MCF 10A (cell line): ENCODE measurements at regions of chr3 and their contacts with region 1.

Region 1: DNA sequence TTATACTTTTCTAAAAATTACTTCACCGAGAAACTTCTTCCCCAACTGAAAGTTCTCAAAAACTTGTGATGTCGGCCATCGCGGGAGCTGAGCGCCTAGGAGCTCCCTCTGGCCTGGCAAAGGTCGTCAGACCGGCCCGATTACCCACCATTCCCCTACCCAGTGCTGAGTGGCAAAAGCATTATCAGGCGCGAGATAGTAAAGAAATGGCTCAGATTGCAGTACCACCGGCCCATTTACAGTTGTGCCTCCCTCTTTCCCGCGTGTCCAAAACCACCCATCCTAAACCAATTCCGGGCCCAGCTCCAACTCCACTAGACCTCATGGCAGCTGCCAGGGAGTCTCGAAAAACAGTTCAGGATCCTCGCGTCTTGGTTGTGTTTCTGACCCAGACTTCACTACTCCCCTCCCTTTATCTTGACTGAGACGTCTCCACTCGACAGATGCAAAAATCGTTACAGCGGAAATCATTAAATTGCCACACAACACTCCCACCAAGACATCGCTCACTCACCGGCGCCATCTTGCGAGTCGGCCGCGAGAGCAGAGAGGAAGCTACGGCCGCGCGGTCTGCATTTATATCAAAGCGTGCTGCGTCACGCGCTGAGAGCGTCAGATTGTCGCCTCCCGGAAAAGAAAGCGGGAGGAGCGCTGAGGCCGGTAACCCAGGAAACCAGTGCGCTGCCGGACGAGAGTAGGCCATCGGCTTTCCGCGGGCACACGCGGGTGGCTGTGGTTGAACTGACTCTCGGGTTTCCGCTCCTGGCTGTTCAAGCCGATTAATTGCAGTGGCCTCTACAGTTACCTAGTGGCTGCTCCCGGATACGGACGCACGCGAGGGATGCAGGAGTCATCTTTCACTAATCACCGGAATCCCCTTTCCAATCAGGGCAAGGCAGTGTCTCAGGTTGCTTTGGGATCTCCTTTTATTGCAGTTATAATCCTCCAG is at the start of gene RPL22L1:
- DNase-seq: peak; percentile 96
- H3K4me3 Mint-ChIP-seq: peak within 1 kb of the TSS; percentile 93
- H3K27ac Mint-ChIP-seq: peak within 1 kb of the TSS; percentile 97
- H3K4me1 Mint-ChIP-seq: peaks cover 10% of the 10 kb centered on the region
- H3K27me3 Mint-ChIP-seq: no peaks in the 10 kb centered on the region
- CTCF ChIP-seq: no peak
- total RNA-seq, gene RPL22L1: 205 and 409 TPM in 2 replicates

Region 2: GRCh38 chr3:170826047-170826446 is 43.9 kb before region 1 on chr3:
- CTCF ChIA-PET with region 1: no interaction called
- POLR2A ChIA-PET with region 1: no interaction called
- intact Hi-C with region 1: no loop called
- DNase-seq: no peak
- H3K4me3 Mint-ChIP-seq: no peak overlapping the region
- H3K27ac Mint-ChIP-seq: no peak overlapping the region
- H3K4me1 Mint-ChIP-seq: no peaks in the 10 kb centered on the region
- H3K27me3 Mint-ChIP-seq: peaks cover 11% of the 10 kb centered on the region
- CTCF ChIP-seq: no peak

Region 3: GRCh38 chr3:170889132-170889531 is 19.2 kb after region 1 on chr3:
- CTCF ChIA-PET with region 1: no interaction called
- POLR2A ChIA-PET with region 1: interaction called, 17 read pairs
- intact Hi-C with region 1: no loop called
- DNase-seq: no peak
- H3K4me3 Mint-ChIP-seq: no peak overlapping the region
- H3K27ac Mint-ChIP-seq: no peak overlapping the region
- H3K4me1 Mint-ChIP-seq: no peaks in the 10 kb centered on the region
- H3K27me3 Mint-ChIP-seq: no peaks in the 10 kb centered on the region
- CTCF ChIP-seq: no peak

Region 4: DNA sequence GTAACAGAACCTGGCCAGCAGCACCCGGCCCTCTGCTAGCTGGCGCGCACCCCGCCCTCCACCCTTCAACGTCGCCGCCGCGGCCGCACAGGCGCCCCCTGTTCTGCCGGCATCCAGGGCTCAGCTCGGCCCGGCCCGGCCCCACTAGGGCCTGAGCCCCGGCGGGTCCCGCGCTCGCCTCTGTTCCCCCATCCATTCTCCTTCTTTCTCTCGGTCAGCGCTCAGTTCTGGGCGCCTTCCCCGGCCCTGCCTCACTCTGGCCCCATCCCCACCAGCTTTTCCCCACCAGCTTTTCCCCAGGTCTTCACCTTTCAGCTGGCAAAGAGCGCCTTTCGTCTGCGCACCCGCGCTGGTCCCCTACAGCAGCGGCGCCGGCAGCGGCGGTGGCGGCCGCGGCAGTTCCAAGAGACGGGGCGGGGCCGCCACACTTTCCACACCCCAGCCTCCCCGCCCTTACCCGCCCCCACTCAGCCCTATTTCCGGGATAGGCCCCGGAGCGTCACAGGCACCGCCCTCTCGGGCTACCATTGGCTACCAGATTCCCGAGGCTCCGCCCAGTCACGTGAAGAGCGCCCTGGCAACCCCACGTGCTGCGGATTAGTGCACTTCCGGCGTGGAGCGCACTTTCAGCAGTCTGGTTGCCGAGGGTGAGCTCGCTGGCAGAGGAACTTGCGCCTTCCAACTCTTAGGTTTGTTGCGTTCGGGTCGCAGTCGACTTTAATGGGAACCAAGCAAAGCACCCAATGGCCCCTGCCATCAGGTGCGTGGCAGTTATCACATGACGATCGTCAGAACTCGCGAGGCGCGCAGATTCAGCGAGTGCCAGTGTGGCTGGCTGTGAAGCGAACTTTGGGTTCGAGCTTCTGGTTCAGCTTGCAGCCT is 38.6 kb after region 1 on chr3 and contains the start of gene EIF5A2:
- CTCF ChIA-PET with region 1: interaction called, 3 read pairs
- POLR2A ChIA-PET with region 1: interaction called, 10 read pairs
- intact Hi-C with region 1: loop called (anchors 1 kb)
- DNase-seq: peak; percentile 88
- H3K4me3 Mint-ChIP-seq: peak within 1 kb of the TSS; percentile 85
- H3K27ac Mint-ChIP-seq: peak within 1 kb of the TSS; percentile 80
- H3K4me1 Mint-ChIP-seq: peaks cover 5% of the 10 kb centered on the region
- H3K27me3 Mint-ChIP-seq: no peaks in the 10 kb centered on the region
- CTCF ChIP-seq: no peak
- total RNA-seq, gene EIF5A2: 6.0 and 15.0 TPM in 2 replicates

Region 5: GRCh38 chr3:171155122-171155700 is 285.3 kb after region 1 on chr3:
- CTCF ChIA-PET with region 1: no interaction called
- POLR2A ChIA-PET with region 1: no interaction called
- intact Hi-C with region 1: no loop called
- DNase-seq: peak; percentile 18
- H3K4me3 Mint-ChIP-seq: no peak overlapping the region
- H3K27ac Mint-ChIP-seq: no peak overlapping the region
- H3K4me1 Mint-ChIP-seq: peaks cover 12% of the 10 kb centered on the region
- H3K27me3 Mint-ChIP-seq: no peaks in the 10 kb centered on the region
- CTCF ChIP-seq: no peak